ENCODE measurements at regions of chr11 and their contacts with region 1.

Region 1: DNA sequence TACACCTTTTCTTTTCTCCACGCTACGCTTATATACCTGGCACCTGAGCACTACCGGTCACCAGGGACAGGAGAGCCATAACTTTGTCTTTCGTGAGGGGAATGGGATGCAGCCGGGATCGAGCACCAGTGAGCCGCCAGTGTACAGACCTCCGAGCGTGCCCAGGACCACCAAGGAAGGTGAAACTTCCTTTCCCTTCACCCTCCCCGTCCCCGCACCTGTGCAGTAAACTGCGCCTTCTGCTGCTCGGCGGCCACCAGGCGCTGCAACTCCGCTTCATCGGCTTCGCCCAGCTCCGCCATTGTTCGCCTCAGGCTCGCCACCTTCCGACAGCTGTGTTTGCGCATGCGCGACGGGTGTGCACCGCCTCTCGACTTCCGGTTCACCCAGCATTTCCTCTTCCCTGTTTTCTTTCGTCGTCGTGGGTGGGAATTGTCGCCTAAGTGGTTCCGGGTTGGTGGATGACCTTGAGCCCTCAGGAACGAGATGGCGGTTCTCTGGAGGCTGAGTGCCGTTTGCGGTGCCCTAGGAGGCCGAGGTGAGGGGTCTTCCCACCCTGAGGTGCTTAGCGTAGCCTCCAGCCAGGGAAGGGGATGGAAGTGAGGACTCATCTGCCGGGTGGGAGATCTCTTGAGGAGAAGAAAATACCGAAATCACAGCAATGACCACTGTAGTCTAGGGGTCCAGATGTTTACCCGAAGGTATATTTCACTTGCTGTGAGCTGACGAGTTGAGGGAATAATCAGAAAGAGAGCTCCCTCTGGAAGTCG is at the starts of genes SDHD and TIMM8B:
- DNase-seq: peak; percentile 84 to 95
- H3K4me3 ChIP-seq: peak within 1 kb of the TSS; percentile 85 to 99 (median 90)
- H3K27ac ChIP-seq: peak within 1 kb of the TSS; percentile 79
- H3K4me1 ChIP-seq: peaks cover 0 to 3% (median 0%) of the 10 kb centered on the region in 4 experiments; a peak in 3 of 7 replicates
- H3K27me3 ChIP-seq: no peaks in the 10 kb centered on the region
- CTCF ChIP-seq: peak in 1 of 3 experiments; percentile 17; a peak in 2 of 4 replicates
- EP300 ChIP-seq: no peak
- POLR2A ChIP-seq: peak; percentile 28 to 61; a peak in 2 of 3 replicates
- RAD21 ChIP-seq: peak in 1 of 2 experiments; percentile 3; a peak in 1 of 4 replicates
- total RNA-seq, gene SDHD: 90.3 and 96.0 TPM in 2 replicates
- total RNA-seq, gene TIMM8B: 86.1 and 93.7 TPM in 2 replicates

Region 2: GRCh38 chr11:112074026-112074811 is 12.4 kb before region 1 on chr11 and contains the start of gene NKAPD1:
- CTCF ChIA-PET with region 1: no interaction called
- POLR2A ChIA-PET with region 1: interaction called, 15 read pairs
- DNase-seq: peak; percentile 64 to 83
- H3K4me3 ChIP-seq: peak within 1 kb of the TSS; percentile 95 to 98 (median 97)
- H3K27ac ChIP-seq: peak within 1 kb of the TSS; percentile 95
- H3K4me1 ChIP-seq: no peaks in the 10 kb centered on the region; a peak in 1 of 7 replicates
- H3K27me3 ChIP-seq: no peaks in the 10 kb centered on the region
- CTCF ChIP-seq: no peak
- EP300 ChIP-seq: no peak
- POLR2A ChIP-seq: 0 out of 3 replicates have a peak, but pooled peaks of 1 of the 2 experiments have one; percentile 44
- RAD21 ChIP-seq: no peak
- total RNA-seq, gene NKAPD1: 16.7 and 20.4 TPM in 2 replicates

Measured in H1 (cell line).